ENCODE measurements at regions of chr16 and their contacts with region 1.

Region 1: DNA sequence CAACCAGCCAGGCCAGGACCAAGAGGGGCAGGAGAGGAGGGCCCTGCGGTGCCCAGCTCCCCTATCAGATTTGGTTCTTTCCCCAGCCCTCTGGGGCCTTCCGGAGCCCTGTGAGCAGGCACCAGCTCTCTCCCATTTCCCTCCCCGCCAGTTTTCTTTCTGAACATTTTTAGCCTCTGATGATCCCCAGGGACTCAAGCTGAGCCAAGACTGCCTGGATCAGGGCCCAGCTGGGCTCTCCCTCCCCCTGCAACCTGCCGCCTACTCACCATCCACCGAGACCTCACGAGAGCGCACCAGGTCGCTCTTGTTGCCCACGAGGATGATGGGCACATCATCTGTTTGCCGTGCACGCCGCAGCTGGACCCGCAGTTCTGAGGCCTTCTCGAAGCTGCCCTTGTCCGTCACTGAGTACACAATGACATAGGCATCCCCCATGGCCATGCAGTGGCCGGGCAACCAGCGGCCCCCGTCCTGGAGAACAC is 2.0 kb downstream of the RRAD start:
- DNase-seq: peak; percentile 75
- ATAC-seq: peak; percentile 34

Region 2: DNA sequence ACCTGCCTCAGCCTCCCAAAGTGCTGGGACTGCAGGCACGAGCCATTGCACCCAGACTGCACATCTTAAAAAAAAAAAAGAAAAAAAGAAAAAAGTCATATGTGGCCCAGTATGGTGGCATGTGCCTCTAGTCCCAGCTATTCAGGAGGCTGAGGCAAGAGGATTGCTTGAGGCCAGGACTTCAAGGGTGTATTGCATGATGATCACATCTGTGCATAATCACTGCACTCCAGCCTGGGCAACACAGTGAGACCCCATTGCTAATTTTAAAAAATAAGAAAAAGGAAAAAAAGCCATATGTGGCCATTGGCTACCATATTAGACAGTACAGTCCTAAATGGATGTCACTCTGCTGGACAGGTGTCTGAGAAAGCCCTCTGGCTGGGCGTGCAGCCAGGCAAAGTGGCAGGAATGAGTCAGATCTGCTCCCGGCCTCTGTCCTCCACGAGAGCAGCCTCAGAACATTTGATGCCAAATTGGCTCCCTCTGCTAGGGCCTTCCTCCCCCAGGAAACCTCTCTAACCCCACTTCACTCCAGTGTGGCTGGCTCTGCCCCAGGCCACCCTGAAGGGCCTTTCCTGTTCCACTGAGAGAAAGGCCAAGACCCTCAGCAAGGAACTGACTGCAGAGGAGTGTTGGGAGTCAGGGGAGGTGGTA is 64.4 kb before region 1 on chr16:
- intact Hi-C with region 1: no loop called
- DNase-seq: peak; percentile 79
- ATAC-seq: peak; percentile 90

Region 3: GRCh38 chr16:66905633-66906539 is 17.4 kb before region 1 on chr16:
- intact Hi-C with region 1: loop called (anchors 2 kb)
- DNase-seq: peak; percentile 79
- ATAC-seq: peak; percentile 41